Gastrocnemius medialis (tissue), 4 donors: ENCODE measurements at regions of chr17 and their contacts with region 1.

Region 1: DNA sequence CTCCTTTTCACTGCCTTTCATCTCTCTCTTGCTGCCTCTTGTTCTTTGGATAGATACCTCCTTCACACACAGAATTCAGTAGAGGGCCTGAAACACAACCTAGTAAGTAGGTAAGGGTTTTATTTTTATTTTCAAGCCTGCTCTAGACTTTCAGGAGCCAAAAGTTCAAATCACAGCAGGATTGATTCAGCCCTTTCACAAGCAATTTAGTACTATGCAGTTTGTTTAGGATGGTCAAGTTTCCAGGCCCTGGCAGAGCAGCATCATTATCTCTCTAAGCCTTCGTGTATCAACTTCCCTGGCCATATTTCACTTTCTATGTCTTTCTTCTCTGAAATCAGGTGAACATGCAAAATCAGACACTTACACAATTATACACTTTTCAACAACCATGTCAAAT is 148.8 kb upstream of the CORO6 start:
- DNase-seq: no peak
- ATAC-seq: no peak
- H3K4me3 ChIP-seq: no peak overlapping the region
- H3K27ac ChIP-seq: peak overlapping the region; percentile 70 to 84 (median 79)
- H3K4me1 ChIP-seq: peaks cover 14 to 21% of the 10 kb centered on the region in 2 donors
- H3K27me3 ChIP-seq: no peaks in the 10 kb centered on the region
- CTCF ChIP-seq: no peak
- POLR2A ChIP-seq: no peak

Region 2: GRCh38 chr17:29633886-29634285 is 137.7 kb before region 1 on chr17:
- in situ Hi-C with region 1: loop called in 2 of 4 experiments (anchors 10 kb)
- intact Hi-C with region 1: no loop called
- DNase-seq: no peak
- ATAC-seq: no peak
- H3K4me3 ChIP-seq: no peak overlapping the region
- H3K27ac ChIP-seq: peak overlapping the region; percentile 97 to 100 (median 98)
- H3K4me1 ChIP-seq: peaks cover 42 to 73% of the 10 kb centered on the region in 2 donors
- H3K27me3 ChIP-seq: no peaks in the 10 kb centered on the region
- CTCF ChIP-seq: no peak
- POLR2A ChIP-seq: no peak

Region 3: DNA sequence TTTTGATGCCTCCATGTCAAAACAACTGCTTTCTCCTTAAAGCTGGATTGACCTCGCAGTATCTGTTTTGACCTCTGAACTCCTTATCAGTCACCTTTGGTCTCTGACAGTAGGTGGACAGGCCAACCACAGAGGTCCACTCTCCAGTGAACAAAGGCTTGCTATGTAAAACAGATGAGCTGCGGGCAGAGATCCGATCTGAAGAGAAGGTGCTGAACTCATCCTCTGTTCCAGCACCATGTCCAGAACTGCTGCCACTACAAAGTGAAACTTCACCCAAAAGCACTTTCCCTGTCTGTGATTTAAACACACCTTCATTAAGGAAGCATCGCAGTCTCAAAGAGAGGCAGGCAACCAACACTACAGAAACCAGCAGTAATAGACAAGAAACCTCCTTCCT is 31.5 kb before region 1 on chr17:
- in situ Hi-C with region 1: no loop called
- intact Hi-C with region 1: no loop called
- DNase-seq: no peak
- ATAC-seq: peak in 1 of 2 donors; percentile 9
- H3K4me3 ChIP-seq: peak overlapping the region in 1 of 4 donors; percentile 3
- H3K27ac ChIP-seq: peak overlapping the region; percentile 91 to 97 (median 94)
- H3K4me1 ChIP-seq: peaks cover 53 to 61% of the 10 kb centered on the region in 2 donors
- H3K27me3 ChIP-seq: no peaks in the 10 kb centered on the region
- CTCF ChIP-seq: no peak
- POLR2A ChIP-seq: no peak